Ascending aorta (tissue), 2 donors: ENCODE measurements at regions of chr6 and their contacts with region 1.

Region 1: DNA sequence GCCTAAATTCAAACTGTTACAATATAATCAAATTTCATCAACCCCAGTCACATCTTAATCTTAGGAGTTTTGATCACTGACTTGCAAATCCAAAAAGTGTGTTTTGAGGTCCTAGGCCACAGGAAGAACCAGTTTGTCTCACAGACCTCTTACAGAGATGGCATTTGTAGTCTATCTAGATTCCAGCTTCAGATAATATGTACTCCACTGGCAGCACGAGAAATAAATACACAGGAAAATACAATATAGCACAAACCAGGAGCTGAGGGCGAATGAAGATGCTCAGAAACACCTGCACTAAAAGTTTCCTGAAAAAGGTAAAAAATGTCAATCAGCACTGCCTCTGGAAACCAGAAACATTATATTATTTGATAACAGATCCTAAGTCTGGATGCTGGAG is 647 bp upstream of the BTN3A3 start:
- DNase-seq: no peak
- H3K4me3 ChIP-seq: peak overlapping the region; percentile 60 to 63
- H3K27ac ChIP-seq: peak overlapping the region in 1 of 2 donors; percentile 67
- H3K4me1 ChIP-seq: peaks cover 0 to 10% of the 10 kb centered on the region in 2 donors
- H3K27me3 ChIP-seq: no peaks in the 10 kb centered on the region
- CTCF ChIP-seq: no peak

Region 2: GRCh38 chr6:25913741-25914140 is 525.9 kb before region 1 on chr6:
- intact Hi-C with region 1: no loop called
- DNase-seq: no peak
- H3K4me3 ChIP-seq: no peak overlapping the region
- H3K27ac ChIP-seq: no peak overlapping the region
- H3K4me1 ChIP-seq: no peaks in the 10 kb centered on the region
- H3K27me3 ChIP-seq: no peaks in the 10 kb centered on the region
- CTCF ChIP-seq: no peak

Region 3: DNA sequence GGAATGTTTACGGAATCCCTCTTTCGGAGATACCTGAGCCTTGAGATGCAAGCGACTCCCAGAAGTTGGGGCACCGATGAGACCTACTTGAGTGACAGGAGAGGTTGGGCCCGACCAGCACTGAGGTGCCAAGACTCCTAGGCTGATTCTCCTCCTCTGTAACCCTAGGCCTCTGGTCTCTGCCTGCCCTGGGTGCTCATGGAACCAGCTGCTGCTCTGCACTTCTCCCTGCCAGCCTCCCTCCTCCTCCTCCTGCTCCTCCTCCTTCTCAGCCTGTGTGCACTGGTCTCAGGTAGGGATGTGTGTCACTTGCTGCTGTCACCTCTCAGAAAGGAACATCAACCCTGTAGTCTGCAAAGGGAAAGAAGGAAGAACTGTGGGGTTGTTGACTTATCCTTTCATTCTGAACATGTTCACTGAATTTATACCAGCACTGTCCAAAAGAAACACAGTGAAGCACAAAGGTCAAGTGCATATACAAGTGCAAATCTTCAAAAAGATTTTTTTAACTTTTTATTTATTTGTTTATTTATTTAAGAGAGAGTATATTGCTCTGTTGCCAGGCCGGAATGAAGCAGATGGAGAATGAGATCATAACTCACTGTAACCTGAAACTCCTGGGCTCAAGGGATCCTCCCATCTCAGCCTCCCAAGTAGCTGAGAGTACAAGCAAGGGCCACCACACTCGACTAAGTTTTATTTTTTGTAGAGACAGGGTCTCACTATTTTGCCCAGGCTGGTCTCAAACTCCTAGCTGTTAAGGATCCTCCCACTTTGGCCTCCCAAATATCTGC is 55.8 kb before region 1 on chr6:
- intact Hi-C with region 1: loop called (anchors 1 kb)
- DNase-seq: peak in 1 of 2 donors; percentile 66
- H3K4me3 ChIP-seq: peak overlapping the region; percentile 69 to 76
- H3K27ac ChIP-seq: peak overlapping the region; percentile 67 to 68
- H3K4me1 ChIP-seq: peaks cover 0 to 2% of the 10 kb centered on the region in 2 donors
- H3K27me3 ChIP-seq: no peaks in the 10 kb centered on the region
- CTCF ChIP-seq: no peak

Region 4: GRCh38 chr6:26421259-26422144 is 18.2 kb before region 1 on chr6:
- intact Hi-C with region 1: loop called (anchors 1 kb)
- DNase-seq: peak; percentile 38 to 87
- H3K4me3 ChIP-seq: peak overlapping the region; percentile 52 to 97
- H3K27ac ChIP-seq: peak overlapping the region; percentile 75 to 95
- H3K4me1 ChIP-seq: peaks cover 5 to 35% of the 10 kb centered on the region in 2 donors
- H3K27me3 ChIP-seq: no peaks in the 10 kb centered on the region
- CTCF ChIP-seq: no peak

Region 5: DNA sequence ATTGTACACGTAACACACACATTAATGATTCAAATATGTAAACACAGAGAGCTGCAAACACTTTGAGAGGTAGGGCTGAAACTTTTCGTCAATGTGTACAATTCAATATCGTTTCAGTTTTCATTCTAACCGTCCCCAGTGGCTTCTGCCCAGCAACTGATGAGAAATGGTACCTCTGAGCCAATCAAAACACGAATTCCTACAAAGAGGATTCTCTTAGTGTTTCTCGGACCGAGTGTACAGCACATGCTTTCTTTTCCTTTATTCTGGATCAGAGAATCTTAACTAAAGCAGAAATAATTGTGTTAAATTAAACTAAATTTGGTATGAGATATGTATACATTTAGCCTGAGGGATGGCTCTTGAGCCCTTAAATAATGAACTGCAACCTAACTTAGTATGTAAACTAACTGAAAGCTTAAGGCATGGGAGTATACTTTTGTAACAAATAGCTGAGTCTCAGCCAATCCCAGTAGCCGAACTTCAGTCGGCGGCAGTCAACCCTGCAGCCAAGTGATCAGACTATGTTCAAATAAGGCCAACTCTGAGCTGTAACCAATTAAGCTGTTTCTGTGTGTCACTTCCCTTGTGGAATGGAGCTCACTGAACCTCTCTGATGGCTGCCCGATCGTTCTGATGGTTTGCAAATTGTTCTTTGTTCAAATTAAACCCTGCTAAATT is 34.2 kb after region 1 on chr6:
- intact Hi-C with region 1: loop called (anchors 5 kb)
- DNase-seq: peak; percentile 68 to 92
- H3K4me3 ChIP-seq: peak overlapping the region; percentile 57 to 64
- H3K27ac ChIP-seq: peak overlapping the region; percentile 91
- H3K4me1 ChIP-seq: peaks cover 6 to 9% of the 10 kb centered on the region in 2 donors
- H3K27me3 ChIP-seq: no peaks in the 10 kb centered on the region
- CTCF ChIP-seq: no peak

Region 6: DNA sequence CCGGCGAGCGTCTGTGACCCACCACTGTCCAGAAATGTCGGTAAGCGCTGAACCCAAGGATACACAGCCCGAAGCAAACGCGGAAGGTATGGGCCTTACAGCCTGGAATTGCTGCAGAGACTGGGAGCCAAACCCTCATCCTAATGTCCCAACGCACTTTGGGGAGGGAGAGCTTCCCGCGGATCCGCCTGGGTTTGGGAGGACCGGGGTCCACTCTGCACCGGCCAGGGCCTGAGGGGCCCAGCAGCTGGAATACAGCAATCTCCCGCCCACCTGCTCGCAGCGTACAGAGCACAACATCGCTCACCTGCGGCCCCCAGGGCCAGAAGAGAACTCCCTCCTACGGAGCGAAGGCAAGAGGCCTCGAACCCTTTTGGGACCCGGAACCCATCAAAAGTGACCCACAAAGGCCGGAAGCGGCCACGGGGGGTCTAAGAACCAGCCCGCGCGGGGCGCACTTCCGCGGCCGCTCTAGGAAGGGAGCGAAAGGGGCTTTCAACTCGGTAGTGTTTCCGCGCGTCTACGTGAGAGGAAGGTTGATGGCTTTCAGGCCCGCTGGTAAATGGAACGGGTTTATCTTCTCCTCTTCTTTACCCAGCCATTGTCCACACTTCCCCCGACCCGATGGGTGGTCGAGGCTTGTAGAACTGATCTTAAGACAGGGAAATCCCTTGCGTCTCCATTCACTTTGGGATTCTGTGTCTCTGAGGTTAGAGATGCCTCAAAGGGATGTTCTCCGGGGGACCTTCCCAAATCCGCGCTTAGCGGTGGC is 1959.9 kb after region 1 on chr6 and contains the start of gene ZSCAN12:
- intact Hi-C with region 1: no loop called
- DNase-seq: peak; percentile 17 to 90
- H3K4me3 ChIP-seq: peak within 1 kb of the TSS; percentile 76 to 84
- H3K27ac ChIP-seq: peak within 1 kb of the TSS in 1 of 2 donors; percentile 59
- H3K4me1 ChIP-seq: peaks cover 0 to 13% of the 10 kb centered on the region in 2 donors
- H3K27me3 ChIP-seq: no peaks in the 10 kb centered on the region
- CTCF ChIP-seq: peak; percentile 34 to 49 (median 37)
- total RNA-seq, gene ZSCAN12: 5.3 TPM